K562 (cell line): ENCODE measurements at regions of chr7 and their contacts with region 1.

Region 1: DNA sequence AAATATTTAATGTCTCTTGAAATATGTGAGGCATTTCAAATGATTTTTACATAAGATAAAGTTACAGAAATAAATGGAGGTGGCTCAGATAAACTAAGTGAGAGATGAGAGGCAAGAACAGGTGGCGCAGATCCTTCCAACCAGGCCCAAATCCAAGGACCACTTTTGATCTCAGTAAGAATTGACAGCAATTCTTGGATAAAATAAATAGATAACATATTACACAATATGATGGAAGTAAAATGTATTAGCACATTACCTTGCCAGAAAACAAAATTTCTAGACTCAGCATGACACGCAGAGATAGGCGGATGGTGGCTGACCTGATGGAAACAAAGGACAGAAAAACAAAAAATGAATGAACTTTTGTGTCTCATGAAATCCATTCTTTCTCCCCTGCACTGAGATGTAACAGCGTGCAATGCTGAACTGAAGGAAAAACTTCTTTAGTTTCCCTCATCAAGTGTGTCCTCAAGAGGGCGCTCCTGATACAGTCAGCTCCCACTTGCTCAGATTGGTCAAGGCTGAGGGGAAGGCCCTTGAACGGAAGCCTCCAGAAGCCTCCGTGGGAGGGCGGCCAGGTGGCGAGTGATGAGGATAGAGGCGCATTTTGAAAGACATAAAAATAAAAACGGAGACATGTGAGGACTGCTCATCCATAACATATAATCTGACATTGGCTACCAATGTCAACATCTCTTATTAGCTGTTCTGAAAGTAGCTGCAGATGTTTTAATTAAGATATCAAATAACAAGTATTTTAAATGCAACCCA is 62.8 kb upstream of the GSDME start:
- DNase-seq: peak; percentile 83 to 94 (median 86)
- ATAC-seq: peak; percentile 95
- H3K4me3 ChIP-seq: no peak overlapping the region
- H3K27ac ChIP-seq: peak overlapping the region; percentile 80; the same call in 2 of the 3 replicates
- H3K4me1 ChIP-seq: peaks cover 9 to 22% of the 10 kb centered on the region in 2 experiments; a peak in 4 of 5 replicates
- H3K27me3 ChIP-seq: no peaks in the 10 kb centered on the region
- CTCF ChIP-seq: peak; percentile 88 to 92 (median 91)
- EP300 ChIP-seq: peak; percentile 17; the same call in 1 of the 2 replicates
- POLR2A ChIP-seq: no peak
- RAD21 ChIP-seq: peak; percentile 94 to 97

Region 2: DNA sequence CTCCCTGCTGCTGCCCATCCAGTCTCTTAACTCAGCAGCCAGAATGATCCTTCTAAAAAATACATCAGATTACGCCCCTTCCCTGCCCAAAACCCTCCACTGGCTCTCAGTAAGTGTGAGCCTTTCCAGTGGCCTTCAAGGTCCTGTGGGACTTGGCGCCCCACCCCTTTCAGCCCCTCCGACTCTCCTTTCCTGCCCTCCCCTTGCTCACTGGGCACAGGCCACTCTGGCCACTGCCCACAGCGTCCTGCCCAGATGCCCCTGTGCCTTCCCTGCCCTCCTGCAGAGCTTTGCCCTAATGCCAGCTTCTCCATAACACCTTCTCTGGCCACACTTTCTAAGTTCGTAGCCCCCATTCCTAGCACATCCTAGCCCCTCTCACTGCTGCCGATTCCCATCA is 76.6 kb before region 1 on chr7:
- CTCF ChIA-PET with region 1: no interaction called
- POLR2A ChIA-PET with region 1: no interaction called
- in situ Hi-C with region 1: no loop called
- intact Hi-C with region 1: no loop called
- DNase-seq: no peak
- ATAC-seq: no peak
- H3K4me3 ChIP-seq: no peak overlapping the region
- H3K27ac ChIP-seq: no peak overlapping the region
- H3K4me1 ChIP-seq: peaks cover 0 to 5% of the 10 kb centered on the region in 2 experiments; a peak in 2 of 5 replicates
- H3K27me3 ChIP-seq: peaks cover 8 to 13% of the 10 kb centered on the region in 2 experiments; a peak in 4 of 5 replicates
- CTCF ChIP-seq: no peak
- EP300 ChIP-seq: no peak
- POLR2A ChIP-seq: no peak
- RAD21 ChIP-seq: no peak

Region 3: GRCh38 chr7:24863626-24864025 is 43.5 kb after region 1 on chr7:
- CTCF ChIA-PET with region 1: no interaction called
- POLR2A ChIA-PET with region 1: no interaction called
- in situ Hi-C with region 1: no loop called
- intact Hi-C with region 1: loop called (anchors 2 kb)
- DNase-seq: no peak
- ATAC-seq: no peak
- H3K4me3 ChIP-seq: no peak overlapping the region
- H3K27ac ChIP-seq: no peak overlapping the region
- H3K4me1 ChIP-seq: peaks cover 9 to 22% of the 10 kb centered on the region in 2 experiments; a peak in 4 of 5 replicates
- H3K27me3 ChIP-seq: no peaks in the 10 kb centered on the region
- CTCF ChIP-seq: no peak
- EP300 ChIP-seq: no peak
- POLR2A ChIP-seq: no peak
- RAD21 ChIP-seq: no peak

Region 4: GRCh38 chr7:24881622-24882021 is 61.5 kb after region 1 on chr7:
- CTCF ChIA-PET with region 1: no interaction called
- POLR2A ChIA-PET with region 1: interaction called, 3 read pairs
- in situ Hi-C with region 1: no loop called
- intact Hi-C with region 1: loop called (anchors 2 kb)
- DNase-seq: peak in 1 of 4 experiments; percentile 20
- ATAC-seq: peak; percentile 65
- H3K4me3 ChIP-seq: no peak overlapping the region
- H3K27ac ChIP-seq: no peak overlapping the region
- H3K4me1 ChIP-seq: peaks cover 0 to 12% of the 10 kb centered on the region in 2 experiments; a peak in 2 of 5 replicates
- H3K27me3 ChIP-seq: no peaks in the 10 kb centered on the region
- CTCF ChIP-seq: peak; percentile 39 to 91 (median 67); a peak in 5 of 6 replicates
- EP300 ChIP-seq: no peak
- POLR2A ChIP-seq: no peak
- RAD21 ChIP-seq: peak in 1 of 2 experiments; percentile 31; a peak in 2 of 4 replicates

Region 5: DNA sequence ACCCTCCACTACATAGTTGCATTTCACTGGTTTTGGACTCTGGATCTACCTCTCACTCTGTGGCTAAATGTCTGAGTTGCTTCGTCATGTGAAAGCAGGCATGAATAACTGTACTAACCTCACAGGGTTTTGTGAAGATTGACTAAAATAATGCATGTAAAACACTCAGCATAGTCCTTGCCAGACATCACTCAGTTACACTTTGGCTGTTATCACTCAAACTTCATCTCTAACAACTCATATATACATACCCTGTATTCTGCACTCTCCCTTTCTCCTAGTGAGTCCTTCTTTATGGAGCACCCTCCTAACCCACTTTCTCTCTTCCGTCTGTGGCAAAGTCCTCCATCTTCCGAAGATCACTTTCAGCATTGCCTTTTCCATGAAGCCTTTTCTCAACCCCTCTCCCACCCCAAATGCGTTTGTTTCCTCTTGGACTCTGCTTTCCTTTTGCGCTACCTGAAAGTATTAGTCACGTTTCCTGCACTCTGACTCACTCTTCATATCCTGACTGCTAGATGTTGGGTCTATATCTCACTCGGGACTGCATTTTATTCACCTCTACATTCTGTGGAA is 87.3 kb after region 1 on chr7:
- CTCF ChIA-PET with region 1: no interaction called
- POLR2A ChIA-PET with region 1: interaction called, 3 read pairs
- in situ Hi-C with region 1: no loop called
- intact Hi-C with region 1: loop called (anchors 2 kb)
- DNase-seq: peak in 3 of 4 experiments; percentile 27 to 72 (median 56)
- ATAC-seq: peak; percentile 71
- H3K4me3 ChIP-seq: peak overlapping the region; percentile 14; the same call in 1 of the 2 replicates
- H3K27ac ChIP-seq: peak overlapping the region; percentile 75
- H3K4me1 ChIP-seq: peaks cover 41 to 87% of the 10 kb centered on the region in 2 experiments
- H3K27me3 ChIP-seq: no peaks in the 10 kb centered on the region
- CTCF ChIP-seq: no peak
- EP300 ChIP-seq: no peak; the same call in 1 of the 2 replicates
- POLR2A ChIP-seq: peak; percentile 47; the same call in 1 of the 2 replicates
- RAD21 ChIP-seq: no peak; a peak in 1 of 4 replicates

Region 6: DNA sequence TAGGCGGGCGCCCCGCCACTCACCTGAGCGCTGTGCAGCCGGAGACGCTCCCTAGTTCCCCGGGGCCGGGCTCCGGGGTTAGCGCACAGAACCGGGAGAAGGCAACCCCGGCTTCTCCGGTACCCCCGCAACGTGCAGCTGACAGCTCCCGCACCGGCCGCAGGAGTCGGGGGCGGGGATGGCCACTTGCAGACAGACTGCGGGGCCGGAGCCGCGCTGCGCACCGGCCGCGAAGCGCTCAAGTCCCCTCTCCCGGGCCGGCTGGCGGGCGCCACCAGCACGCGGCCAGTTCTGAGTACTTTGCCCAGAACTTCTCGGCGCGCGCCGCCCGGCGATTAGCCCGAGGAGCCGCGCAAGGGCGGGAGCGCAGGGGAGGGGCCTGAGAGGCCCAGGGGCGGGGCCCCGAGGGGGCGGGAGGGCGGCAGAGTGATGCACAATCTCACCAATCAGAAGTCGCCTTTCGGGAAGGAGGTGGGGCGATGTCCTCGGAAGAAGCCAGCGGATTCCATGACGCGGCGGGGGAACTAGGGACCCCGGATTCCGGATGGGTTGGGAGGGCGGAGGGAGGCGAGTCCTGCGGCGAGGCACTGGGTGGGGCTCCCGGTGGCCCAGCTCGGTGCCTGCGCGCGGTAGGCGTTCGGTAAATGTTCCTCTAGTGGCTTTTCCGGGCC is 159.9 kb after region 1 on chr7 and contains the start of gene OSBPL3:
- CTCF ChIA-PET with region 1: interaction called, 5 read pairs
- POLR2A ChIA-PET with region 1: no interaction called
- in situ Hi-C with region 1: loop called (anchors 5 kb)
- intact Hi-C with region 1: loop called (anchors 1 kb)
- DNase-seq: peak; percentile 96 to 99 (median 98)
- ATAC-seq: peak; percentile 88
- H3K4me3 ChIP-seq: peak within 1 kb of the TSS; percentile 85
- H3K27ac ChIP-seq: peak within 1 kb of the TSS; percentile 80
- H3K4me1 ChIP-seq: peaks cover 21 to 34% of the 10 kb centered on the region in 2 experiments
- H3K27me3 ChIP-seq: no peaks in the 10 kb centered on the region
- CTCF ChIP-seq: peak in 2 of 3 experiments; percentile 22 to 53; a peak in 4 of 6 replicates
- EP300 ChIP-seq: no peak; the same call in 1 of the 2 replicates
- POLR2A ChIP-seq: peak; percentile 86
- RAD21 ChIP-seq: peak; percentile 14 to 36; a peak in 2 of 4 replicates
- polyA plus RNA-seq, gene OSBPL3: 4.8 to 6.8 TPM

Region 7: GRCh38 chr7:24987331-24987842 is 167.3 kb after region 1 on chr7:
- CTCF ChIA-PET with region 1: no interaction called
- POLR2A ChIA-PET with region 1: no interaction called
- in situ Hi-C with region 1: loop called (anchors 5 kb)
- intact Hi-C with region 1: no loop called
- DNase-seq: no peak
- ATAC-seq: no peak
- H3K4me3 ChIP-seq: no peak overlapping the region
- H3K27ac ChIP-seq: no peak overlapping the region
- H3K4me1 ChIP-seq: peaks cover 0 to 4% of the 10 kb centered on the region in 2 experiments; a peak in 1 of 5 replicates
- H3K27me3 ChIP-seq: no peaks in the 10 kb centered on the region
- CTCF ChIP-seq: no peak
- EP300 ChIP-seq: no peak
- POLR2A ChIP-seq: no peak
- RAD21 ChIP-seq: no peak

Region 8: DNA sequence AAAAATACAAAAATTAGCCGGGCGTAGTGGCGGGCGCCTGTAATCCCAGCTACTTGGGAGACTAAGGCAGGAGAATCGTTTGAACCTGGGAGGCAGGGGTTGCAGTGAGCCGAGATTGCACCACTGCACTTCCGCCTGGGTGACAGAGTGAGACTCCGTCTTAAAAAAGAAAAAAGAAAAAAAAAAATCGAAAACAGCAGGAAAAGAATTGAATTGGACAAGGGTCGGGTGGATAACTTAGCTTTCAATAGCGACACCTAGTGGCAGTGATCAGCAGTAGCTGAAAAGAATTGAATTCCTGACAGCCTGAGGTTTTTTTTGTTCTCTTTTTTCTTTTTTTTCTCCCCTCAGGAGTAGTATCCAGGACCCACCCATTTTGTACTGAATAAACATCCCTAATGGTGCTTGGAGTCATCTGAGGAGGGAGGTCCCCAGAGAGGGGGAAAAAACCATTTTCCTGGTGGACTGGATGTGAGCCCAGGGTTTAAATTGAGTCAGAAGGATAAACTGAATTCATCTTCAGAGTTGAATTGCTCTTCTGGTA is 249.9 kb after region 1 on chr7:
- CTCF ChIA-PET with region 1: interaction called, 21 read pairs
- POLR2A ChIA-PET with region 1: interaction called, 3 read pairs
- in situ Hi-C with region 1: no loop called
- intact Hi-C with region 1: loop called (anchors 1 kb)
- DNase-seq: peak; percentile 74 to 78 (median 76)
- ATAC-seq: peak; percentile 77
- H3K4me3 ChIP-seq: no peak overlapping the region
- H3K27ac ChIP-seq: no peak overlapping the region
- H3K4me1 ChIP-seq: peaks cover 0 to 11% of the 10 kb centered on the region in 2 experiments; a peak in 4 of 5 replicates
- H3K27me3 ChIP-seq: no peaks in the 10 kb centered on the region
- CTCF ChIP-seq: peak; percentile 71 to 91 (median 84)
- EP300 ChIP-seq: no peak
- POLR2A ChIP-seq: no peak
- RAD21 ChIP-seq: peak; percentile 80 to 84